CD14-positive monocyte (primary cell): ENCODE measurements at regions of chr4 and their contacts with region 1.

Region 1: DNA sequence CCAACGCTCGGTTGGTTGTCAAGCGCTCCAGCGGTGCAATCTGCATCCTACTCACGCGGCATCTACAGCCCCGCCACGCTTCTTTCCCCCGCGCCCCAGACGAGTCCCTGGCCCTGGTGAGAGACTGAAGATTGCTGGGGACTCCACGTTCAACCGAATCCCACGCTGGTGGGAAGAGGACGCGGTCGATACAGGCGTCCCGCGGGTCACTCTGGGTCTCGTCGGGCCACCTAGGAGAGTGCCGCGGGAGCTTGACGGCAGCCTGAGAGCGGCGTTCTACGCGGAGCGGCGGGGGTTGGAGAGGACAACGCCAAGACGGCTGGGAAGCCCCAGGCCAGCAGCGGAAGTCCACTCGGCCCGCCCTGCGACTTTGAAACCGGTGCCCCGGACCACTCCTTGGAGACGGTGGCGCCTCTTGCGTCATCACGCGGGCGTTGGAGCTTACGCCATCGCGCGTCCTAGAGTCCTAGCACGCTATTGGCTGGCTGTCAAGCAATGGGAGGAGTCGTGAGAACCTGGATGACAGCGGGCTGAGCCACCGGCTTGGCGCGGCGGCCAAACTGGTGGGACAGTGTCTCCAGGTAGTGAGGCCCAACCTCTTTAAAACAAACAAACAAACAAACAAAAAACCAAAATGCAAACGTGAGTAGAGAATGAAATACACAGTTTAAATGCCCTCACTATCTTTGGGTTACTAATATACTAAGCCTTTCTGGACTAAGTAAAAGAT is at the start of gene SCLT1:
- DNase-seq: peak; percentile 99
- H3K4me3 ChIP-seq: peak within 1 kb of the TSS; percentile 73 to 81 (median 81)
- H3K4me3 Mint-ChIP-seq: peak within 1 kb of the TSS in 1 of 2 donors; percentile 44
- H3K27ac ChIP-seq: peak within 1 kb of the TSS; percentile 97 to 99
- H3K27ac Mint-ChIP-seq: peak within 1 kb of the TSS in 2 of 7 donors; percentile 35 to 88
- H3K4me1 ChIP-seq: peaks cover 38 to 61% of the 10 kb centered on the region in 2 donors
- H3K4me1 Mint-ChIP-seq: peaks cover 43% of the 10 kb centered on the region
- H3K27me3 ChIP-seq: no peaks in the 10 kb centered on the region
- H3K27me3 Mint-ChIP-seq: peaks cover 0 to 1% (median 0%) of the 10 kb centered on the region in 3 donors
- CTCF ChIP-seq: no peak
- polyA plus RNA-seq, gene SCLT1: 14.8 to 20.1 (median 17.9) TPM

Region 2: GRCh38 chr4:127965062-127965802 is 1128.1 kb before region 1 on chr4 and contains the starts of genes ABHD18 and MFSD8:
- intact Hi-C with region 1: loop called in 1 of 2 experiments (anchors 10 kb)
- DNase-seq: peak; percentile 100
- H3K4me3 ChIP-seq: peak within 1 kb of the TSS; percentile 83 to 96 (median 92)
- H3K4me3 Mint-ChIP-seq: peak within 1 kb of the TSS; percentile 94
- H3K27ac ChIP-seq: peak within 1 kb of the TSS; percentile 91 to 97
- H3K27ac Mint-ChIP-seq: peak within 1 kb of the TSS; percentile 91 to 97 (median 96)
- H3K4me1 ChIP-seq: peaks cover 12 to 17% of the 10 kb centered on the region in 2 donors
- H3K4me1 Mint-ChIP-seq: peaks cover 26% of the 10 kb centered on the region
- H3K27me3 ChIP-seq: no peaks in the 10 kb centered on the region
- H3K27me3 Mint-ChIP-seq: no peaks in the 10 kb centered on the region
- CTCF ChIP-seq: peak; percentile 45
- polyA plus RNA-seq, gene ABHD18: 6.1 to 9.5 (median 6.4) TPM
- polyA plus RNA-seq, gene MFSD8: 7.0 to 15.8 (median 14.2) TPM

Region 3: GRCh38 chr4:128287871-128288688 is 805.3 kb before region 1 on chr4:
- intact Hi-C with region 1: loop called (anchors 5 to 10 kb)
- DNase-seq: peak; percentile 97 to 99 (median 99)
- H3K4me3 ChIP-seq: peak overlapping the region; percentile 71 to 81 (median 73)
- H3K4me3 Mint-ChIP-seq: peak overlapping the region; percentile 88 to 94
- H3K27ac ChIP-seq: peak overlapping the region; percentile 77 to 83
- H3K27ac Mint-ChIP-seq: peak overlapping the region; percentile 82 to 95 (median 94)
- H3K4me1 ChIP-seq: peaks cover 20 to 33% of the 10 kb centered on the region in 2 donors
- H3K4me1 Mint-ChIP-seq: peaks cover 29% of the 10 kb centered on the region
- H3K27me3 ChIP-seq: no peaks in the 10 kb centered on the region
- H3K27me3 Mint-ChIP-seq: peaks cover 0 to 5% (median 2%) of the 10 kb centered on the region in 3 donors
- CTCF ChIP-seq: no peak

Region 4: DNA sequence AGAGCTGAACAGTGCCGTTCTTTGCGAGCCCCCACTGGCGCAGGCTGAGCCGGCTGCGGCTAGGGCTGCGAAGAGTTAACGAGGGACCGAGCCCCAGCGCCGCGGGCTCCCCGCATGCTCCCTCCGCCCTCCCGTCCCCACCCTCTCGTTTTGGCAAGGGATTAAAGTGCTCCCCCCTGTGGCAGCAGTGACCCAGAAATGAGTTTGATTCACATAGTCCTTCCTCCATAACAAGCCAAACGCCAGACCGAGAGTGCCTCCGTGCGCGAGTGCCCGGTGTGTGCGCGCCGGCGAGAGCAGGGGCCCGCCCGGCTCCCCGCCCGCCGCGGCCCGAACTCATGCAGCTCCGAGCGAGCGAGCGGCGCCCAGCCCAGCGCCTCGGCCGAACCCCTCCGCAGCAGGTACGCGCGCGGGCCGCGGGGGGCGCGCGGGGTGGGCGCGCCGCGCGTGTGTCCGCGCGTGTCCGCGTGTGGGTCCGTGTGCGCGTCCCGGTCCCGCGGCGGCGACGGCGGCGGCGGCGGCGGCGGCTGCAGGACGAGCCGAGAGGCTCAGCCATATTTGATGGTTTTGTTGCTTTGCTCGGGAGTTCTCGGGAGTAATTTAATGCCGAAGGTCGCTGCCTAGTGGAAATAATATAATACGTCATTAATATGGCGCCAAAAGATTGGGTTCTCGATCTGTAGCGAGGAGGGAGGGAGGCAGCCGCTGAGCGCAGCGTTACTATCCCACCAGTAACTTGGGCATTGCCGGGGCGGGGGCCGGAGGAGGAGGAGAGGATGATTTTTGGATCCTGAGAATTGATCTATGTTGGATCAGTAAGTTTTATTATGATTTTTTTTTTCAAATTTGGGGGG is 283.7 kb before region 1 on chr4 and contains the start of gene JADE1:
- intact Hi-C with region 1: loop called (anchors 10 kb)
- DNase-seq: peak; percentile 82 to 83 (median 83)
- H3K4me3 ChIP-seq: peak within 1 kb of the TSS; percentile 63 to 99 (median 99)
- H3K4me3 Mint-ChIP-seq: peak within 1 kb of the TSS; percentile 97 to 99
- H3K27ac ChIP-seq: peak within 1 kb of the TSS; percentile 64 to 74
- H3K27ac Mint-ChIP-seq: peak within 1 kb of the TSS; percentile 82 to 97 (median 91)
- H3K4me1 ChIP-seq: peaks cover 19 to 31% of the 10 kb centered on the region in 2 donors
- H3K4me1 Mint-ChIP-seq: peaks cover 23% of the 10 kb centered on the region
- H3K27me3 ChIP-seq: no peaks in the 10 kb centered on the region
- H3K27me3 Mint-ChIP-seq: no peaks in the 10 kb centered on the region
- CTCF ChIP-seq: peak; percentile 55
- polyA plus RNA-seq, gene JADE1: 7.3 to 12.8 (median 12.3) TPM

Region 5: DNA sequence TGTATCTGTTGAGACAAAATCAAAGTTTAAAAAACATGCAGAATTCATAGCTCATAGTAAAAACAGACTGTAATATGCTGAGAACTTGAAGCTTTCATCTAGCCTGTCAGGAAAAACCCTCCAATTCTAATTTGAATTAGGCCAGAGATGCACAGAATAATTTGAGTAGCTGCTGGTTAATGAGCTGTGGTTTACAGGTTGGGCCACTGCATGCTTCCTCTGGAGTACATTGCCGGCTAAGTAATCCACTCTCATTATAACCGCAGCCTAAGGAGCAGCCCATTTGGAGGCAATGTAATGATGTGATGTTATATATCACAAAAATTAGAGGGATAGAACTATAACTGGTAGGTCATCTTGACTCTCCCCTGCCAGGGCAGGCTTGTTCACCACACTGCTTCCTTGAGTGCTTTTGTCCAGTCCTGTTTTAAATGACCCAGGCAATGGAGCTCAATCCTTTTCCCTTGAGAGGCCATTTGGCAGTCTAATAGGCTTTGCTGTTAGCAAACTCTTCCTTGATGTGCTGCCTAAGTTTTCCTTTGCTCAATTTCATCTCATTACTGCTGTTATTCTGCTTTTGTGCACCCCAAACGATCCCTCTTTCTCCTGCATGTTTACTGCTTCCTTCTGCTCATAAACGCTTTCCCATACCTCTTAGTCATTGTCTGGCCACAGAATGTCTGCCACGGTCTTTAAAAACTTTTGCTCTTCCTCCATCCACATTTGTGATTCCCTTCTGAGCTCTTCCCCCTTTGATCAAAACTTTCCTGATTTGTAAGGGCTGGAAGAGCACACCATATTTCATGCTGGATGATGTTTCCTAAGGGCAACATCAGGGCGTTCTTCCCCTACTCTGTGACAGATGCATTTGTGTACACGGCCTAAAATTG is 233.5 kb after region 1 on chr4:
- intact Hi-C with region 1: loop called in 1 of 2 experiments (anchors 10 kb)
- DNase-seq: peak; percentile 43 to 70 (median 46)
- H3K4me3 ChIP-seq: peak overlapping the region in 1 of 3 experiments; percentile 38
- H3K4me3 Mint-ChIP-seq: peak overlapping the region in 1 of 2 donors; percentile 60
- H3K27ac ChIP-seq: peak overlapping the region; percentile 69 to 98
- H3K27ac Mint-ChIP-seq: peak overlapping the region; percentile 90 to 98 (median 94)
- H3K4me1 ChIP-seq: peaks cover 46 to 51% of the 10 kb centered on the region in 2 donors
- H3K4me1 Mint-ChIP-seq: peaks cover 54% of the 10 kb centered on the region
- H3K27me3 ChIP-seq: no peaks in the 10 kb centered on the region
- H3K27me3 Mint-ChIP-seq: peaks cover 0 to 6% (median 3%) of the 10 kb centered on the region in 3 donors
- CTCF ChIP-seq: no peak